Head of caudate nucleus (tissue), 42 donors: ENCODE measurements at regions of chr19 and their contacts with region 1.

Region 1: GRCh38 chr19:6108721-6109633 is 1.3 kb downstream of the RFX2 start:
- DNase-seq: peak in 37 of 42 donors; percentile 20 to 75 (median 54)

Region 2: DNA sequence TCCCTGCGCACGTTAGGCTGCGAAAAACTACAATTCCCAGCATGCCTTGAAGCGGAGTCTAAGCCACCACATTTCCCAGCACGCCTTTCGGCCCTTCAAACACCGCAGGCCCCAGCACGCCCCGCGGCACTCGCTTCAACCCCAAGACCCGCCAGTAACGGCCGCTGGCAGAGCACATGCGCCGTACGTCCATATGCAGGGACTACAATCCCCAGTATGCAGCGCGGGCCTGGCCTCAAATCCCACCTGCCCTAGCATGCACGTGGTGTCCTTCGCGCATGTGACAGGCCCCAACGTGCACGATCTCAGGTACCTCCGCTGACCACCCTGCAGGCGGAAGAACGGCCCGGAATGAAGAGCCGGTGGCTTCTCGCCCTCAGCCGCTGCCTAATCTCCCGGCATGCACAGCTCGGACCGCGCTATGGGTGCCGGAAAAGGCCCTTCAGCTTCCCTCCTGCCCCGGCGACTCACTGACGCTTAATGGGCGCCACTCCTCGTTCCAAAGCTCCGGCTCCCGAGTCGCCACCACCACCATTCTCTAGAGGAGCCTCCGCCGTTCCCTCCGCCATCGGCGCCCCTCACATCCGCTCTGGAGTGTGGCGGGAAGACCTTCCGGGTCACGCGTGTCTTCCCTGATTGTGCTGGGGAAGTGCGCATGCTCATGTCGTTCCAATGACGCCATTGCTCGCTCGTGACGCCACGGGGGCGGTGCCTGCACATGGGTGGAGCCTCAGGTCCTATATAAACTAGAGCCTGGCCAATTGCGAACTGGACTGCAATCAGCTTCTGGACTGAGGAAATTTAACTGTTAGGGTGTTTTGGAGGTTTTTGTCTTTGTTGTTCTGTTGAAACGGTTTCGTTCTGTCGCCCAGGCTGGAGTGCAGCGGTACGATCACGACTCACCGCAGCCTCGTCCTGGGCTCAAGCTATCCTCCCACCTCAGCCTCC is 318.1 kb before region 1 on chr19 and contains the start of gene DUS3L:
- intact Hi-C with region 1: no loop called
- DNase-seq: peak; percentile 93 to 99 (median 97)

Region 3: GRCh38 chr19:6056801-6057650 is 52.0 kb before region 1 on chr19:
- intact Hi-C with region 1: loop called (anchors 10 kb)
- DNase-seq: peak in 38 of 42 donors; percentile 32 to 87 (median 59)